ENCODE measurements at regions of chr1 and their contacts with region 1.

Region 1: DNA sequence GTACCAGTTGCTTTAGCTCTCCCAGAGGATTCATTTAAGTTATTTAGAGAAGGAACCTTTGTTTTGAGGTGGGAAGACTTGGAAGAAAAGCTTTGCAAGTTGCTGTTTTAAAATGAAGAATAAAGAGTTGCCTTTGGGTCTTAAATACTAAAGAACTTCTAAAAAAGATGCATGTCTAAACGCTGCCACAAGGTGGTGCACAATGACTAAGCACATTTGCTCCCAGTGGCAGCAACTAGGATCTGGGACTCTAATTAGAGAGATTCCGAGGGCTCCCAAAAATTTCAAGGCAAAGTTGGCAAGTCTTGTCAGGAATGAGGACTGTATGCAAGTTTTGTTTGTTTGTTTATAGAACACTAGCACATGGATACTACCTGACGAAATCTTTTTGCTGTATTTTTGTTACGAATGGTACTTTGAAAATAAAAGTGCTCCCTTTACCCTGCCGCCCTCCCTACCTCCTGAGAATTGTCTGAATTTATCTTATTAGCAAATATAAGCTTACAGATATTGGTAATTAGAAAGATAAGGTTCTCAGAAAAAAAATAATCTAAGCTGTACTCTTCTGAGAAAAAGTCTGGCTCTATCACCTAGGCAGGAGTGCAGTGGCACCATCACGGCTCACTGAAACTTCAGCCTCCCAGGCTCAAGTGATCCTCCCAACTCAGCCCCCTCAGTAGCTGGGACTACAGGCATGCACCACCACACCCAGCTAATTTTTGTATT is 121.8 kb downstream of the HFM1 start:
- DNase-seq: peak; percentile 43 to 77
- ATAC-seq: peak; percentile 73 to 85; a peak in 5 of 6 replicates
- H3K4me3 ChIP-seq: no peak overlapping the region
- H3K27ac ChIP-seq: peak overlapping the region; percentile 45 to 75
- H3K4me1 ChIP-seq: peaks cover 12% of the 10 kb centered on the region; the same call in 1 of the 3 replicates
- CTCF ChIP-seq: peak; percentile 79
- EP300 ChIP-seq: no peak
- POLR2A ChIP-seq: no peak
- RAD21 ChIP-seq: peak; percentile 79 to 86

Region 2: DNA sequence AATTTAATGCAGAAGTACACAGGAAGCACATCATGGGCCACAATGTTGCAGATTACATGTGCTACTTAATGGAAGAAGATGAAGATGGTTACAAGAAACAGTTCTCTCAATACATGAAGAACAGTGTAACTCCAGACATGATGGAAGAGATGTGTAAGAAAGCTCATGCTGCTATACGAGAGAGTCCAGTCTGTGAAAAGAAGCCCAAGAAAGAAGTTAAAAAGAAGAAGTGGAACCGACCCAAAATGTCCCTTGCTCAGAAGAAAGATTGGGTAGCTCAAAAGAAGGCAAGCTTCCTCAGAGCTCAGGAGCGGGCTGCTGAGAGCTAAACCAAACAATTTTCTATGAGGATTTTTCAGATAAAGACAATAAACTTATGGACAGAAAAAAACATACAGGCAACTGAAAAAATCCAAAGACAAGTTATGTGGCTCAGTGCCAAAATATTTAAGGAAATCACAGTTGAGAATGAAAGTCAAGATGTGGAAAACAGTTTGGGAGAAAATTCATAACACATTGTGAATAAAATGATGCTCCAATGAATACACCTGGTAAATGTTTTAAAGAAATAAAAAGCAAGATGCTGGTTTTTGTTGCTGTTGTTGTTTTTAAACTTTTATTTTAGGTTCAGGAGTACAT is 258.3 kb before region 1 on chr1:
- CTCF ChIA-PET with region 1: no interaction called
- POLR2A ChIA-PET with region 1: no interaction called
- DNase-seq: no peak
- ATAC-seq: no peak
- H3K4me3 ChIP-seq: no peak overlapping the region
- H3K27ac ChIP-seq: no peak overlapping the region
- H3K4me1 ChIP-seq: peaks cover 15% of the 10 kb centered on the region
- CTCF ChIP-seq: no peak
- EP300 ChIP-seq: no peak
- POLR2A ChIP-seq: no peak
- RAD21 ChIP-seq: no peak

Region 3: DNA sequence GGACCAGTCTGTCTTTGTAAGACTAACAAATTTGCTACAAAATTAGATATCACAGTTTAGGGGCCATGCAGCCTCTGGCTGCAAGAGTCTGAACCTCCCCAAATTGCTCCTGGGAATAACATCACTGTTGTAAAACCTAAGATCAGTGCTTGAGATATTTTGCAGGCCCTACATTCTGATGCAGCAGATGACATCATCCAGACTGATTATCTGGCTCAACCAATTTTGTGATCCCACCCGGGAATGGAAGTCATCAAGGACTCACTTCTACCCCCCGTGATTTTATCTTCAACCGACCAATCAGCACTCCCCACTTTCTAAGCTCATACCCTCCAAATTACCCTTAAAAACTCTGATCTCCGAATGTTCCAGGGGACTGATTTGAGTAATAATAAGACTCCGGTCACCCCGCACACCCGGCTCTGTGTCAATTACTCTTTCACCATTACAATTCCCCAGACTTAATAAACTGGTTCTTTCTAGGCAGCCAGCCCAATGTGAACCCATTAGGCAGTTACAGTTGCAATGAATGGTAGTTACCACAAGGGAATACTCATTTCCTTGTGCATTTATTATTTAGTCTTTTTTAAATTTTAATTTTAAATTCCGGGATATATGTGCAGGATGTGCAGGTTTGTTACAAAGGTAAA is 56.3 kb before region 1 on chr1:
- CTCF ChIA-PET with region 1: no interaction called
- POLR2A ChIA-PET with region 1: no interaction called
- DNase-seq: no peak
- ATAC-seq: no peak
- H3K4me3 ChIP-seq: no peak overlapping the region
- H3K27ac ChIP-seq: no peak overlapping the region
- H3K4me1 ChIP-seq: no peaks in the 10 kb centered on the region
- CTCF ChIP-seq: no peak
- EP300 ChIP-seq: no peak
- POLR2A ChIP-seq: no peak
- RAD21 ChIP-seq: no peak

Region 4: DNA sequence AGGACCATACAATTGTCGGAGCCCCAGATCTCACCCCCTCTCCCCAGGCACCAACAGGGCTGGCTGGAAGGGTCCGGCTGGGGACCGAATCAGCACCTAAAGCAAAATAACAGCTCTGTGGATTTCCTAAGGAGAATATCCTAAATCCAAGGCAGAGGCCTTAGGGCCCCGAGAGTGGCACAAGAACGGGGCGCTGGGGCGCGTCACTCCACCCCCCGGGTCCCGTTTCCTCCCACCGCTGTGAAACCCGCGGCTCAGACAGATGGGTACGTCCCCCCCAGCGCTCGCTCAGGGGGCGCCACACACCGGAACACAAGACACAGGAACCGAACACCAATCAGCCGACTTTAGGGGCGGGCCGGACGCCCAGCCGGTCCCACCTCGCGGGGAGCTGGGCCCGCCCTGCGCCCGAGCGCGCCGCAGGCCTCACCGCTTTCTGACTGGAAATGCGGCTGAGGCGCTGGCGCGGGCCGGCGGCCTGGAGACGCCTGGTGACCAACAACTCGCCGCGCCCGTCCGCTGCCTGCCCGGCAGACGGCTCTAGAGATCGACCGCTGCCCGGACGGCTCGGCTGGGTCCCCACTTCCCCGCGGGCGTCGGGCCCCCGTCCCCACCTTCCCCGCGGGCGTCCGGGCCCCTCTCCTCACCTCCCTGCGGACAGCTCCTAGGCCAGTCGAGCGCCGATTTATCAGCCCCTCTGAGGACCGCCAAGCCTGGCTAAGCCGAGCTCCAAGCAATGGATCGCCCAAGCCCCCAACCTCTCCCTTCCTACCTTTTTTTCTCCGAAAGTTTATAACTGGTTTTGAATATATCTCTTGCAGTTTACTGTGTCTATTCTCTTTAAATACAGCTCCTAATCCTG is 121.5 kb after region 1 on chr1 and contains the start of gene HFM1:
- CTCF ChIA-PET with region 1: interaction called, 17 read pairs
- POLR2A ChIA-PET with region 1: no interaction called
- DNase-seq: peak; percentile 43 to 73
- ATAC-seq: peak; percentile 96 to 99
- H3K4me3 ChIP-seq: peak within 1 kb of the TSS; percentile 63
- H3K27ac ChIP-seq: peak within 1 kb of the TSS; percentile 68 to 90
- H3K4me1 ChIP-seq: no peaks in the 10 kb centered on the region; the same call in 2 of the 3 replicates
- CTCF ChIP-seq: no peak
- EP300 ChIP-seq: no peak
- POLR2A ChIP-seq: peak; percentile 32; the same call in 1 of the 2 replicates
- RAD21 ChIP-seq: no peak; a peak in 1 of 5 replicates
- polyA plus RNA-seq, gene HFM1: 0.42 and 0.68 TPM in 2 replicates